AG04450 (cell line): ENCODE measurements at regions of chr13 and their contacts with region 1.

Region 1: GRCh38 chr13:113322043-113322461 is 25.0 kb downstream of the LAMP1 start:
- DNase-seq: no peak
- H3K4me3 ChIP-seq: no peak overlapping the region
- H3K27ac ChIP-seq: no peak overlapping the region
- H3K27me3 ChIP-seq: no peaks in the 10 kb centered on the region
- CTCF ChIP-seq: no peak

Region 2: GRCh38 chr13:113029487-113030258 is 292.4 kb before region 1 on chr13:
- CTCF ChIA-PET with region 1: interaction called, 11 read pairs
- POLR2A ChIA-PET with region 1: no interaction called
- DNase-seq: no peak
- H3K4me3 ChIP-seq: no peak overlapping the region
- H3K27ac ChIP-seq: no peak overlapping the region
- H3K27me3 ChIP-seq: peaks cover 18% of the 10 kb centered on the region
- CTCF ChIP-seq: peak; percentile 83